WTC11 (cell line): ENCODE measurements at regions of chr19 and their contacts with region 1.

Region 1: GRCh38 chr19:44770550-44771257 is 7.0 kb upstream of the CBLC start:
- DNase-seq: peak; percentile 99
- ATAC-seq: peak; percentile 100
- H3K4me3 Mint-ChIP-seq: no peak overlapping the region; the same call in 1 of the 2 replicates
- H3K27ac Mint-ChIP-seq: 0 out of 2 replicates have a peak overlapping the region, but pooled peaks have one; percentile 60
- H3K4me1 Mint-ChIP-seq: peaks cover 6% of the 10 kb centered on the region
- H3K27me3 Mint-ChIP-seq: peaks cover 36% of the 10 kb centered on the region
- CTCF ChIP-seq: peak; percentile 82

Region 2: GRCh38 chr19:44662691-44663385 is 107.9 kb before region 1 on chr19:
- CTCF ChIA-PET with region 1: interaction called, 17 read pairs
- POLR2A ChIA-PET with region 1: interaction called, 4 read pairs
- DNase-seq: no peak
- ATAC-seq: no peak
- H3K4me3 Mint-ChIP-seq: no peak overlapping the region
- H3K27ac Mint-ChIP-seq: no peak overlapping the region
- H3K4me1 Mint-ChIP-seq: peaks cover 13% of the 10 kb centered on the region
- H3K27me3 Mint-ChIP-seq: no peaks in the 10 kb centered on the region
- CTCF ChIP-seq: no peak

Region 3: DNA sequence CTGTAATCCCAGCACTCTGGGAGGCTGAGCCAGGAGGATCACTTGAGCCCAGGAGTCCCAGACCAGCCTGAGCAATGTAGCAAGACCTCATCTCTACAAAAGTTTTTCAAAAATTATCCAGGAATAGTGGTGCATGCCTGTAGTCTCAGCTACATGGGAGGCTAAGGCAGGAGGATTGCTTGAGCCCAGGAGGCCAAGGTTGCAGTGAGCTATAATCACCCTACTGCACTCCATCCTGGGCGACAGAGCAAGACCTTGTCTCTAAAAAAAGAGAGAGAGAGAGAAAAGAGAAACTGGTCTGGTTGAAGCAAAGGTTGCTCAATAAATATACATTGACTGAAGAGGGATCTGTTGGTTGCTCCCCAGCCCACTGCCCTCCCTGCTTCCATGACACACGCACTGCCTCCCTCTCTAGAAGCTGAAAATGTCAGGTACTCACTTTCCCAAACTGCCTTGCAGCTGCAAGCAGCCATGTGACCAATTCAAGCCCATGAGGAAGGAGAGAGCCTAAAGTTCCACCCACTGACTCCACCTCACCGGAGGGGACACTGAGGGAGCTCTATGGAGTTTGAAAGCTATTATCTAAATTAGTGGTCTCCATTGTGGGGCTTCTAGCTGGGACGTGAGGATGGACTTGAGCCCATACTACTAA is 57.7 kb before region 1 on chr19:
- CTCF ChIA-PET with region 1: interaction called, 548 read pairs
- POLR2A ChIA-PET with region 1: interaction called, 6 read pairs
- DNase-seq: no peak
- ATAC-seq: peak; percentile 76
- H3K4me3 Mint-ChIP-seq: no peak overlapping the region
- H3K27ac Mint-ChIP-seq: peak overlapping the region; percentile 49; the same call in 1 of the 2 replicates
- H3K4me1 Mint-ChIP-seq: peaks cover 7% of the 10 kb centered on the region
- H3K27me3 Mint-ChIP-seq: no peaks in the 10 kb centered on the region
- CTCF ChIP-seq: no peak

Region 4: GRCh38 chr19:44741841-44742352 is 28.8 kb before region 1 on chr19:
- CTCF ChIA-PET with region 1: interaction called, 23 read pairs
- POLR2A ChIA-PET with region 1: no interaction called
- DNase-seq: no peak
- ATAC-seq: peak; percentile 43
- H3K4me3 Mint-ChIP-seq: no peak overlapping the region
- H3K27ac Mint-ChIP-seq: no peak overlapping the region
- H3K4me1 Mint-ChIP-seq: peaks cover 19% of the 10 kb centered on the region
- H3K27me3 Mint-ChIP-seq: peaks cover 37% of the 10 kb centered on the region
- CTCF ChIP-seq: no peak

Region 5: GRCh38 chr19:44808463-44809371 is 38.0 kb after region 1 on chr19 and contains the start of gene BCAM:
- CTCF ChIA-PET with region 1: interaction called, 23 read pairs
- POLR2A ChIA-PET with region 1: interaction called, 3 read pairs
- DNase-seq: peak; percentile 70
- ATAC-seq: peak; percentile 30
- H3K4me3 Mint-ChIP-seq: peak within 1 kb of the TSS; percentile 75
- H3K27ac Mint-ChIP-seq: peak within 1 kb of the TSS; percentile 95
- H3K4me1 Mint-ChIP-seq: peaks cover 42% of the 10 kb centered on the region
- H3K27me3 Mint-ChIP-seq: peaks cover 78% of the 10 kb centered on the region
- CTCF ChIP-seq: no peak
- total RNA-seq, gene BCAM: 73.1 to 89.5 TPM (median 80.0 TPM) in 3 replicates